ENCODE measurements at regions of chr11 and their contacts with region 1.

Region 1: DNA sequence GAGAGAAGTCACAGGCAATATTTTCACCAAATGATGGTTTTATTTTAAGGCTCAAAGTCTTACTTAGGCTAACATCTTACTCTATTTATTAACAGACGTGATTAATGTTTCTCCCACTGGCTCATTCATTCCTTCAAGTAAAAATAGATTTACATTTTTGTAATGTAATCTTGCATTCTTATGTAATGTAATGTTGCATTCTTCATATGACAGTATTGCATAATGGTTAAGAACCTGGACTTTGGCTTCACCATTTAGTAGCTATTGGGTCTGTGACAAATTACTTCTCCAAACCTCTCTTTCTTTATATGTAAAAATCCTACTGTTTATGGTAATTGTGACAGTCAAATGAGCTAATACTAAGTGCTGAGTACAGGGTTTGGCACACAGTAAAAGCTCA is 3.3 kb upstream of the DIXDC1 start:
- DNase-seq: no peak
- H3K4me3 ChIP-seq: no peak overlapping the region
- H3K27ac ChIP-seq: peak overlapping the region in 2 of 4 donors; percentile 81 to 91
- H3K4me1 ChIP-seq: peaks cover 26 to 62% (median 57%) of the 10 kb centered on the region in 4 donors
- H3K27me3 ChIP-seq: no peaks in the 10 kb centered on the region
- CTCF ChIP-seq: no peak
- EP300 ChIP-seq: no peak
- POLR2A ChIP-seq: no peak

Region 2: GRCh38 chr11:111982019-111982464 is 48.2 kb after region 1 on chr11:
- intact Hi-C with region 1: loop called (anchors 2 kb)
- DNase-seq: no peak
- H3K4me3 ChIP-seq: no peak overlapping the region
- H3K27ac ChIP-seq: peak overlapping the region; percentile 78 to 99 (median 97)
- H3K4me1 ChIP-seq: peaks cover 27 to 61% (median 57%) of the 10 kb centered on the region in 4 donors
- H3K27me3 ChIP-seq: no peaks in the 10 kb centered on the region
- CTCF ChIP-seq: peak; percentile 65 to 78 (median 76)
- EP300 ChIP-seq: no peak
- POLR2A ChIP-seq: no peak

Measured in esophagus muscularis mucosa (tissue), 4 donors.